ENCODE measurements at regions of chr5 and their contacts with region 1.

Region 1: GRCh38 chr5:68950125-68950524 is 143.7 kb upstream of the SLC30A5 start:
- DNase-seq: no peak
- ATAC-seq: no peak
- H3K4me3 ChIP-seq: no peak overlapping the region
- H3K4me3 Mint-ChIP-seq: no peak overlapping the region
- H3K27ac ChIP-seq: no peak overlapping the region
- H3K27ac Mint-ChIP-seq: no peak overlapping the region
- H3K4me1 ChIP-seq: no peaks in the 10 kb centered on the region
- H3K4me1 Mint-ChIP-seq: no peaks in the 10 kb centered on the region
- H3K27me3 ChIP-seq: no peaks in the 10 kb centered on the region
- H3K27me3 Mint-ChIP-seq: no peaks in the 10 kb centered on the region
- CTCF ChIP-seq: no peak

Region 2: GRCh38 chr5:68970617-68971016 is 20.5 kb after region 1 on chr5:
- CTCF ChIA-PET with region 1: no interaction called
- POLR2A ChIA-PET with region 1: no interaction called
- intact Hi-C with region 1: loop called in 1 of 2 experiments (anchors 2 kb)
- DNase-seq: no peak
- ATAC-seq: no peak
- H3K4me3 ChIP-seq: no peak overlapping the region
- H3K4me3 Mint-ChIP-seq: no peak overlapping the region
- H3K27ac ChIP-seq: no peak overlapping the region
- H3K27ac Mint-ChIP-seq: no peak overlapping the region
- H3K4me1 ChIP-seq: no peaks in the 10 kb centered on the region
- H3K4me1 Mint-ChIP-seq: no peaks in the 10 kb centered on the region
- H3K27me3 ChIP-seq: peaks cover 8 to 9% of the 10 kb centered on the region in 2 experiments
- H3K27me3 Mint-ChIP-seq: peaks cover 35% of the 10 kb centered on the region
- CTCF ChIP-seq: no peak

Measured in CD4-positive, alpha-beta T cell (primary cell).